Activated CD8-positive, alpha-beta T cell treated with anti-CD3 and anti-CD28 coated beads for 36 hours (primary cell): ENCODE measurements at regions of chr18 and their contacts with region 1.

Region 1: DNA sequence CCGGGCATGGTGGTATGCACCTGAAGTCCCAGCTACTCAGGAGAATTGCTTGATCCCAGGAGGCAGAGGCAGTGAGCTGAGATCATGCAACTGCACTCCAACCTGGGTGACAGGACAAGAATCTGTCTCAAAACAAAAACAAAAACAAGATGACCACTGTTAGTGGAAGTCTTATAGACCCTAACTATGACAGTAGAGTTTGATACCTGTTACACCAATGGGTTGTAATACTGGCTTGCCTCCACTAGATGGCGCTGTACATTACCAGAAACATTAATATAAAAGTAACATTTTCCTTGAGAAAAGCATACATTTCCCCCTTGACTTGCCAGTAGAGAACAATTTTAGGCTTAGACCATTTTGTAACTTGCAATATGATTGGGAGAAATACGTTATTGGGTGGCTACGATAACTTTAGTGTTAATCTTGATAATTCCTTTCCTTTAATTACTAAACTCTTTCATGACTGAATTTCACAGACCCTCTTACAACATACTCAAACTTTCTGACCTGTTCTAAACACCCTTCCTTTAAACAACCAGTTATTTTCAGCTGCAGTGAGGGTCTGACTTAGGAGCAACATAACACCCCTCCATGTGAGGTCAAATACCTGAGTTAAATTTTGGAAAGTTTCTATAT is 19.5 kb downstream of the SLC25A52 start:
- DNase-seq: peak; percentile 79
- ATAC-seq: peak; percentile 39
- H3K4me3 Mint-ChIP-seq: no peak overlapping the region
- H3K27ac Mint-ChIP-seq: no peak overlapping the region
- H3K4me1 Mint-ChIP-seq: no peaks in the 10 kb centered on the region
- H3K27me3 Mint-ChIP-seq: no peaks in the 10 kb centered on the region
- CTCF ChIP-seq: peak; percentile 91

Region 2: GRCh38 chr18:31447530-31448191 is 293.6 kb before region 1 on chr18 and contains the start of gene DSG3:
- CTCF ChIA-PET with region 1: no interaction called
- POLR2A ChIA-PET with region 1: no interaction called
- intact Hi-C with region 1: no loop called
- DNase-seq: no peak
- ATAC-seq: no peak
- H3K4me3 Mint-ChIP-seq: no peak within 1 kb of the TSS
- H3K27ac Mint-ChIP-seq: no peak within 1 kb of the TSS
- H3K4me1 Mint-ChIP-seq: no peaks in the 10 kb centered on the region
- H3K27me3 Mint-ChIP-seq: no peaks in the 10 kb centered on the region
- CTCF ChIP-seq: no peak
- total RNA-seq, gene DSG3: not detected

Region 3: GRCh38 chr18:31512203-31512764 is 228.9 kb before region 1 on chr18:
- CTCF ChIA-PET with region 1: no interaction called
- POLR2A ChIA-PET with region 1: no interaction called
- intact Hi-C with region 1: no loop called
- DNase-seq: no peak
- ATAC-seq: no peak
- H3K4me3 Mint-ChIP-seq: no peak overlapping the region
- H3K27ac Mint-ChIP-seq: no peak overlapping the region
- H3K4me1 Mint-ChIP-seq: no peaks in the 10 kb centered on the region
- H3K27me3 Mint-ChIP-seq: no peaks in the 10 kb centered on the region
- CTCF ChIP-seq: no peak

Region 4: GRCh38 chr18:31819106-31819924 is 78.1 kb after region 1 on chr18:
- CTCF ChIA-PET with region 1: interaction called, 5 read pairs
- POLR2A ChIA-PET with region 1: no interaction called
- intact Hi-C with region 1: loop called (anchors 1 kb)
- DNase-seq: no peak
- ATAC-seq: no peak
- H3K4me3 Mint-ChIP-seq: no peak overlapping the region
- H3K27ac Mint-ChIP-seq: no peak overlapping the region
- H3K4me1 Mint-ChIP-seq: no peaks in the 10 kb centered on the region
- H3K27me3 Mint-ChIP-seq: no peaks in the 10 kb centered on the region
- CTCF ChIP-seq: peak; percentile 83

Region 5: DNA sequence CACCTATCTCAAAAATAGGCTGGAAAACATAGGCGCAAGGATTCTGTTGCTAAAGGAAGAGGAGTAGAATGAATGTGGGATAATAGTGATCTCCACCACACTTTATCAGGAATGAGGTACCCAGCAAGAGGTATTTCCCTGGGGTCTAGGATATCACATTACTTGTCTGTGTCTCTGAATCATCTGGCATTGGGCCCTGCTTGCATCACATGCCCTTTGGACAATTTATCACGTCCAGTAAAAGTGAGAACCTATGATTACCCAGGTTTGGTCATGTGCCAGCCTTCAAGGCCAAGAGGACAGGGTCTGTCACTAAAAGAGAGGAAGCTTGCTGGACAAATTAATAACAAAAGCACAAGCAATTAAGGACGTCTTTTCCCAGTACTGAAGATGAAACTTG is 213.1 kb after region 1 on chr18:
- CTCF ChIA-PET with region 1: no interaction called
- POLR2A ChIA-PET with region 1: no interaction called
- intact Hi-C with region 1: loop called (anchors 5 kb)
- DNase-seq: no peak
- ATAC-seq: no peak
- H3K4me3 Mint-ChIP-seq: no peak overlapping the region
- H3K27ac Mint-ChIP-seq: no peak overlapping the region
- H3K4me1 Mint-ChIP-seq: peaks cover 1% of the 10 kb centered on the region
- H3K27me3 Mint-ChIP-seq: no peaks in the 10 kb centered on the region
- CTCF ChIP-seq: no peak

Region 6: GRCh38 chr18:31977270-31977872 is 236.2 kb after region 1 on chr18:
- CTCF ChIA-PET with region 1: interaction called, 7 read pairs
- POLR2A ChIA-PET with region 1: no interaction called
- intact Hi-C with region 1: loop called (anchors 5 kb)
- DNase-seq: peak; percentile 19
- ATAC-seq: no peak
- H3K4me3 Mint-ChIP-seq: no peak overlapping the region
- H3K27ac Mint-ChIP-seq: no peak overlapping the region
- H3K4me1 Mint-ChIP-seq: no peaks in the 10 kb centered on the region
- H3K27me3 Mint-ChIP-seq: no peaks in the 10 kb centered on the region
- CTCF ChIP-seq: peak; percentile 68